GM12878 (cell line): ENCODE measurements at regions of chr19 and their contacts with region 1.

Region 1: DNA sequence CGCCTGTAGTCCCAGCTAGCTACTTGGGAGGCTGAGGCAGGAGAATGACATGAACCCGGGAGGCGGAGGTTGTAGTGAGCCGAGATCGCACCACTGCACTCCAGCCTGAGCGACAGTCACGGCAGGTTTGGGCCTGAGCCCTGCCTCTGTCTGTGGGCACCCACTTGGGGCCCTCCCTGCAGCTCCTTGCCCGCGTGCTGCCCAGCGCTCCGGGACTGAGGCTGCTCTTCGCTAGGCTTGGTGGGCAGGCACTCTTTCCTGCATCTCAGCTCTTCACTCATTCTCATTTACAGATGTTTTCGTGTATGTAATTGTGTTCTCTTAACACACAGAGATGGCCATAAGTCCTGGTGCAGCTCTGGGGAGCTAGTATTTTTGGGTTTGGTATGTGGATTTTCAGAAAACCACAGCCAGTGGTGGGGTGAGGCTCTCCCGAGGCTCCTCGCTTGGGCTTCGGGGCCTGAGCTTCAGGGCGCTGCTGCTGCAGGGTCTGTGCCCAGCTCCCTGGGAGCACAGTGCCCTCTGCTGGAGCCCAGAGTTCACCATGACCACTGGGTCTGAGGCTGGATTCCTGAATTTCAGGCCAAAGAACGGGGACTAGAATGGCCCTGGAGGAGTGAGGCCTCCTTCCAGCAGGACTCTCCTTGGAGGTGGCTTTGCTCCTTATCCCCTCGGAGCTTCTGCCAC is 15.2 kb downstream of the UPF1 start:
- DNase-seq: no peak
- ATAC-seq: peak; percentile 75
- H3K4me3 ChIP-seq: no peak overlapping the region
- H3K27ac ChIP-seq: no peak overlapping the region
- H3K4me1 ChIP-seq: peaks cover 56% of the 10 kb centered on the region
- H3K27me3 ChIP-seq: no peaks in the 10 kb centered on the region
- CTCF ChIP-seq: peak; percentile 80 to 94 (median 89)
- EP300 ChIP-seq: no peak
- POLR2A ChIP-seq: no peak
- RAD21 ChIP-seq: peak; percentile 88

Region 2: GRCh38 chr19:18450931-18451845 is 395.8 kb before region 1 on chr19:
- CTCF ChIA-PET with region 1: interaction called, 6 read pairs
- POLR2A ChIA-PET with region 1: no interaction called
- RAD21 ChIA-PET with region 1: interaction called, 3 read pairs
- SMC1A ChIA-PET with region 1: no interaction called
- in situ Hi-C with region 1: loop called (anchors 25 kb)
- intact Hi-C with region 1: loop called (anchors 10 kb)
- DNase-seq: no peak
- ATAC-seq: peak; percentile 98
- H3K4me3 ChIP-seq: no peak overlapping the region
- H3K27ac ChIP-seq: no peak overlapping the region
- H3K4me1 ChIP-seq: no peaks in the 10 kb centered on the region
- H3K27me3 ChIP-seq: no peaks in the 10 kb centered on the region
- CTCF ChIP-seq: peak; percentile 95 to 98 (median 98)
- EP300 ChIP-seq: no peak
- POLR2A ChIP-seq: peak; percentile 7; the same call in 1 of the 2 replicates
- RAD21 ChIP-seq: peak; percentile 91

Region 3: DNA sequence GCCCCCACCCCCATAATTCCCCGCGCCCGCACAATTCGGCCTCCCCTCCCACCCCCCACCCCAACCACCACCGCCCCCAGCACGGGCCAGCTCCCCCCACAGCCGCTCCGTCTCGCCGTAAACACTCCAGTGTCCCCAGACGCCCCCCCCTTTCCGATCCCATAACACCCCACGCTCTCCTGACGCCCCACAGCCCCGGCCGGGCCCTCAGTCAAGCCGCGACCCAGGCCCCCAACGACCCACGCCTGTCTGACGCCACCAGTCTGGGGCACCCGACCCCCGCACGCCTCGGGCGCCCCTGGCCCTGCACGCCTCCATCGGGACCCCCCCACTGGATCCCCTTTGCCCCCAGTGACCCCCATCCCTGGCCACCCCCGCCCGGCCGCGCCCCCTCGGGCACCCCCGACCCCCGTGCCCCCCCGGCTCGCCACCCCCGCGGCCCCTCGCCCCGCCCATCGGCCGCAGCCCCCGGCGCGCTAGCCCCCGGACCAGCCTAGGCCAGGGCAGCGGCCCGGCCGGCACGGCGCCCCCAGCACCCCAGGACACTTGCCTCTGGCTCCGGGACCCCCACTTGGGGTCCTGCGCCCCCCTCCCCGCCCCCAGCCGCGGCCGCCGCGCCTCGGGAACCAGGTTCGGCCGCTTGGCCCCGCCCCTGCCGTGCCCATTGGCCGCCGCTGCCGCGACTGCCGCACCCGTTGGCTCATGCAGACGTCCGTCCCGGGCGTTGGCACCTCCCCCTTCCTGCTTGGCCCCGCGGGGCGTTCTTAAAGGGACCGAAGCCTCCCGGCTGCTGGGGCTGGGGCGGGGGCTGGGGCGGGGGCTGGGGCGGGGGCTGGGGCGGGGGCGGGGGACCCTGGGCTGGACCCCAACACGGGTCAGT is 303.8 kb before region 1 on chr19 and contains the start of gene FKBP8:
- CTCF ChIA-PET with region 1: interaction called, 12 read pairs
- POLR2A ChIA-PET with region 1: no interaction called
- RAD21 ChIA-PET with region 1: interaction called, 6 read pairs
- SMC1A ChIA-PET with region 1: no interaction called
- in situ Hi-C with region 1: no loop called
- intact Hi-C with region 1: no loop called
- DNase-seq: no peak
- ATAC-seq: peak; percentile 99
- H3K4me3 ChIP-seq: peak within 1 kb of the TSS; percentile 82
- H3K27ac ChIP-seq: peak within 1 kb of the TSS; percentile 78
- H3K4me1 ChIP-seq: peaks cover 10% of the 10 kb centered on the region
- H3K27me3 ChIP-seq: no peaks in the 10 kb centered on the region
- CTCF ChIP-seq: no peak
- EP300 ChIP-seq: no peak
- POLR2A ChIP-seq: no peak
- RAD21 ChIP-seq: no peak
- polyA plus RNA-seq, gene FKBP8: 0.13 to 1.1 TPM

Region 4: DNA sequence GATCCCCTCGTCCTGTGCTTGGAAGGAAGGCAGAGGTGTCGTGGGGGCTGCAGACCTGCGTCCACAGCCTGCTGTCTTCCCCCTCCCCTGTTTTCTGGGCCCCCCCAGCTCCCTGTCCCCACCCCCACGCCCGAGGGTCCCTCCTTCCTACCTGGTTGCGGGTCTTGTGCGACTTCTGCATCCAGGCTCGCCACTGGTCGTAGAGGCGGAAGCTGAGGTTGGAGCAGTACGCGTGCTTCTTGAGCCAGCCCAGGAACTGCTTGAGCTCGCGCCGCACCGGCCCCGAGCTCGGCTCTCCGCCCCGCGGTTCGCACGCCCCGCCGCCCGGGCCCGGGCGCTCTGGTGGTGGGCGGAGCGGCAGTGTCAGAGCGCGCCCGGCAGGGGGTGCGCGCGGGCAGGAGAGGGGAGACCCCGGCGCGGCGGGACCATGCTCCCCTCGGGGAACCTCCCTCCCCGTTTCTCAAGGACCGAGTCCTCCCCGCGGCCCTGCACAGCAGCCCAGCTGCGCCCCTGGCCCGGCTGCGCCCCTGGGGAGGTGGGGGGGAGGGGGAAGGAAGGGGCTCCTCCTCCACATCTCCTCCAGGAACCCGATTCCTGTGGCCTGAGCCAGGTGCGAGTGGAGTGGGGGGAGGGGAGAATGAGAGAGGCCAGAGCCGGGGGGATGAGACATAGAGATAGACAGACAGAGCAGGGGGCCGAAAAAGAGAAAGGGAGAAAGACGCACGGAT is 252.7 kb before region 1 on chr19:
- CTCF ChIA-PET with region 1: interaction called, 24 read pairs
- POLR2A ChIA-PET with region 1: no interaction called
- RAD21 ChIA-PET with region 1: interaction called, 7 read pairs
- SMC1A ChIA-PET with region 1: interaction called, 5 read pairs
- in situ Hi-C with region 1: no loop called
- intact Hi-C with region 1: loop called (anchors 5 kb)
- DNase-seq: no peak
- ATAC-seq: peak; percentile 81
- H3K4me3 ChIP-seq: peak overlapping the region; percentile 67
- H3K27ac ChIP-seq: no peak overlapping the region
- H3K4me1 ChIP-seq: peaks cover 15% of the 10 kb centered on the region
- H3K27me3 ChIP-seq: peaks cover 2% of the 10 kb centered on the region in 2 experiments; a peak in 1 of 4 replicates
- CTCF ChIP-seq: peak; percentile 66 to 88 (median 81)
- EP300 ChIP-seq: no peak
- POLR2A ChIP-seq: no peak; the same call in none of the 2 replicates
- RAD21 ChIP-seq: peak; percentile 74

Region 5: DNA sequence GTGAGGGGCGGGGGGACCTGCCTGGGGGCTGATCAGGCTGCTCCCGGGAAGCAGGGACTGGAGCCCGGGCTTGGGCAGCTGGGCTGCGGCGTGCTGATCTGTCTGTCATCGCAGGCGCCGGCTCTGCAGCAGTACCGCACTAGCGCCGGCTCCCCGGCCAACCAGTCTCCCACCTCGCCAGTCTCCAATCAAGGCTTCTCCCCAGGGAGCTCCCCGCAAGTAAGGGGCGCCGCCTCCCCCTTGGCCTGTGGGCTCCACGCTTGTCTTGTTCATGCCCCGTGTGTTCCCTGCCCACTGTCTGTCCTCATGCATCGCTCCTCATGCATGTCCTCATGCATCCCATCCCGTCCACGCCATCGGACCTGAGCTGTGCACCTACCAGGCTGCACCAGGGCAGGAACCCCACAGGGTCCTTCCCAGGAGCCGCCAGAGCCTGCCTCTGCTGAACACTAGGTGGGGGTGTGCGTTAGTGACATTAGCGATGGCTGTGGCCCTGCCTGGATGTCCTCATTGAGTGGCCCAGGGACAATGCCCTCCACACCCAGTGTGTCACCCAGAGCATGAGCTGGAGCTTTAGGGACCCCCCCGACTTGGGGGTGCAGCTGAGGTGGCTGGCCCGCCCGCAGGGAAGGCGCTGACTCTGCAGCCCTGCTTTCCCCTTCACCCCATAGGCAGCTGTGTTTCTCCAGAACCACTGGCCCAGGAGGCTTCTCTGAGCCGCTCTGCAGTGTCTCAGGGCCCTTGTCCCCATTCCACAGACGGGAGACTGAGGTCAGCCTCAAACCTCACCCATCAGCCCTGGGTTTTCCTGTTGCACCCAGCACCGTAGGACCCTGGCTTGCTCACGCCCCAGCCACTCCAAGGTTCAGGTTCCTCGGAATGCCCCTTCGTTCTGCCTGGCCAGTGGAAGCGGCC is 75.4 kb before region 1 on chr19:
- CTCF ChIA-PET with region 1: interaction called, 29 read pairs
- POLR2A ChIA-PET with region 1: no interaction called
- RAD21 ChIA-PET with region 1: interaction called, 12 read pairs
- SMC1A ChIA-PET with region 1: interaction called, 6 read pairs
- in situ Hi-C with region 1: no loop called
- intact Hi-C with region 1: loop called (anchors 5 kb)
- DNase-seq: no peak
- ATAC-seq: peak; percentile 82
- H3K4me3 ChIP-seq: no peak overlapping the region
- H3K27ac ChIP-seq: no peak overlapping the region
- H3K4me1 ChIP-seq: no peaks in the 10 kb centered on the region
- H3K27me3 ChIP-seq: no peaks in the 10 kb centered on the region
- CTCF ChIP-seq: peak; percentile 38 to 60 (median 57); a peak in 4 of 6 replicates
- EP300 ChIP-seq: no peak
- POLR2A ChIP-seq: no peak
- RAD21 ChIP-seq: peak; percentile 43

Region 6: GRCh38 chr19:18831524-18832305 is 15.3 kb before region 1 on chr19 and contains the start of gene UPF1:
- CTCF ChIA-PET with region 1: interaction called, 109 read pairs
- POLR2A ChIA-PET with region 1: interaction called, 6 read pairs
- RAD21 ChIA-PET with region 1: interaction called, 24 read pairs
- SMC1A ChIA-PET with region 1: interaction called, 24 read pairs
- in situ Hi-C with region 1: no loop called
- intact Hi-C with region 1: no loop called
- DNase-seq: no peak
- ATAC-seq: peak; percentile 68
- H3K4me3 ChIP-seq: peak within 1 kb of the TSS; percentile 93
- H3K27ac ChIP-seq: peak within 1 kb of the TSS; percentile 91
- H3K4me1 ChIP-seq: no peaks in the 10 kb centered on the region; the same call in 1 of the 2 replicates
- H3K27me3 ChIP-seq: no peaks in the 10 kb centered on the region
- CTCF ChIP-seq: no peak
- EP300 ChIP-seq: no peak
- POLR2A ChIP-seq: peak; percentile 93
- RAD21 ChIP-seq: no peak
- polyA plus RNA-seq, gene UPF1: 0.58 to 1.1 TPM